Right ventricle myocardium superior (tissue), 1 donor: ENCODE measurements at regions of chr3 and their contacts with region 1.

Region 1: DNA sequence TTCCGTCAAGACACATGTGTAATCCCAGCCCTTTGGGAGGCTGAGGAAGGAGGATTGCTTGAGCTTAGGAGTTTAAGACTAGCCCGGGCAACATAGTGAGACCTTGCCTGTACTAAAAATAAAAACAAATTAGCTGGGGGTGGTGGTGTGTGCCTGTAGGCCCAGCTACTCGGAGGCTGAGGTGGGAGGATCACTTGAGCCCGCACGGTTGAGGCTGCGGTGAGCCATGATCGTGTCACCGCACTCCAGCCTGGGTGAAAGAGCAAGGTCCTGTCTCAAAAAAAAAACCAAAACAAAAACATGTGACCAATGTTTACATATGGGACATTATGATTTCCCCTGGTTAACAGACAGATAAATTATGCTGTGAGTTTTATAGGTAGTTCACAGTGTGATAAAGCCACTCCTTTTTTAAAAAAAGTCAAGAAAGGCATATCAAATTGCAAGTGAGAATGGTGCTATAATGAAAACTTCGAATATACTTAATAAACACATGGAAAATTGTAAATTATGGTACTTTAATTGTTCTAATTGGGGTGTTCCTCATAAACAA is 9.2 kb downstream of the BBX start:
- DNase-seq: no peak
- ATAC-seq: no peak

Region 2: GRCh38 chr3:107235928-107236315 is 296.1 kb before region 1 on chr3:
- intact Hi-C with region 1: loop called (anchors 10 kb)
- DNase-seq: no peak
- ATAC-seq: peak; percentile 76

Region 3: GRCh38 chr3:107367353-107367752 is 164.6 kb before region 1 on chr3:
- intact Hi-C with region 1: no loop called
- DNase-seq: no peak
- ATAC-seq: no peak

Region 4: DNA sequence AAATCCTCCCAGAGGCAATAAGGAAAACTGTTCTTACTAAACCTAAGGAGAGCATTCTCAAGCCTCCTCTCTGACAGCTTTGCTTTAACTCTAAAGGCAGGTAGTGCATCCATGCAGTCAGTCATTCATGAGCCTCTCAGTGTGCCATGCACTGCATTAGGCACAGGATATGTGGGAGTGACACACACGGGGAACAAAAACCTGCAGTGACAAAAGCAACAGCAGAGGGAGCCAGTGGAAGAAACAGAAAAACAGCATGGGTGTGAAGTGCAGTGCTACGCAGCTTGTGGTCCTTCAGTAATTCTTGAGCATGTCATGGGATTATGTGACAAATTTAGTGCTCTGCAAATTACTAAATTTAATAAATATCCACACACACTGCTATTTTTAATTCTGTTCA is 221.5 kb after region 1 on chr3:
- intact Hi-C with region 1: no loop called
- DNase-seq: no peak
- ATAC-seq: peak; percentile 74